Dendritic cell treated with granulocyte-macrophage colony-stimulating factor and Interleukin-4, amounts not matched to agents 40 ng/mL and 50 ng/mL, for 4 days (primary cell): ENCODE measurements at regions of chr19 and their contacts with region 1.

Region 1: GRCh38 chr19:36489118-36489919 is at the start of gene ZNF566:
- H3K4me3 Mint-ChIP-seq: peak within 1 kb of the TSS; percentile 99
- H3K27ac Mint-ChIP-seq: peak within 1 kb of the TSS; percentile 94
- H3K4me1 Mint-ChIP-seq: peaks cover 27% of the 10 kb centered on the region
- H3K27me3 Mint-ChIP-seq: no peaks in the 10 kb centered on the region

Region 2: DNA sequence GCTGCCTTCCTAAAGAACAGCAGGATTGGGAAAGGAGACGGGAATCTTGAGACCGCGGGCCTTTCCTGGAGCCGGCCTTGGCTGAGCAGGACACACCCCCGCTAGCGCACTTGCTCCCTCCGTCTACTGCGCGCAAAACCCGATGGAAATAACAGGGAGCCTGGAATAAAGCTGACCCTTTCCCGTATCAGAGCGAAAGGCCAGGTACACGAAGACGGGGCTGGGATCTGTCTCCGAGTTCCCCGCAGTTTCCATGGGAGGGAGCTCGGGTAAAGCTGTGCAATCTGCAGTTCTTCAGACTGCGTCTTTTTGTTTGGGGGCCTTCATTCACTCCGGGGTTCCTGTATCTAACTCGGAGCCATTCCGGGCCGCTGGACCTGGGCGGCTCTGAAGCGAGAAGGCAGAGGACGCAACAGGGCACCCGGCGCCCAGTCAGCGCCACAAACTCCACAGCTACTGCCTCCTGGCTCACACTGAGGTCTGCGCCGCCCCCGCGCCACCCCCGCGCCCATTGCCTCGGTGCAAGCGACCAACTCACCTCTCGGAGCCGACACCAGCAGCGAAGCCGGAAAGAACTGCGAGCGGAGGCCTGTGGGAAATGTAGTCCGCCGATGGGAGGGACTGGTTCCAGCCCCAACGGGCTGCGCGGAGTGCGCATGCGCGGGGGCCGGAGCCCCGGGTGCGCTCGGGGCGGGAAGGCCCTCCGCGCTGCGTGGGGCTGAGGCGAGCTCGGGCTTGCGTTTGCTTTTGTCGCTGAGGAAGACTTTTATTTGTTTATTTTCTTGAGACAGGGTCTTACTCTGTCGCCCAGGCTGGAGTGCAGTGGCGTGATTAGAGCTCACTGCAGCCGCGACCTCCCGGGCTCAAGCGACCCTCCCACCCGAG is 110.5 kb before region 1 on chr19 and contains the start of gene ZFP14:
- intact Hi-C with region 1: loop called (anchors 2 kb)
- H3K4me3 Mint-ChIP-seq: peak within 1 kb of the TSS; percentile 92
- H3K27ac Mint-ChIP-seq: peak within 1 kb of the TSS; percentile 94
- H3K4me1 Mint-ChIP-seq: peaks cover 17% of the 10 kb centered on the region
- H3K27me3 Mint-ChIP-seq: no peaks in the 10 kb centered on the region

Region 3: GRCh38 chr19:36436531-36436930 is 52.8 kb before region 1 on chr19:
- intact Hi-C with region 1: no loop called
- H3K4me3 Mint-ChIP-seq: no peak overlapping the region
- H3K27ac Mint-ChIP-seq: no peak overlapping the region
- H3K4me1 Mint-ChIP-seq: no peaks in the 10 kb centered on the region
- H3K27me3 Mint-ChIP-seq: no peaks in the 10 kb centered on the region

Region 4: DNA sequence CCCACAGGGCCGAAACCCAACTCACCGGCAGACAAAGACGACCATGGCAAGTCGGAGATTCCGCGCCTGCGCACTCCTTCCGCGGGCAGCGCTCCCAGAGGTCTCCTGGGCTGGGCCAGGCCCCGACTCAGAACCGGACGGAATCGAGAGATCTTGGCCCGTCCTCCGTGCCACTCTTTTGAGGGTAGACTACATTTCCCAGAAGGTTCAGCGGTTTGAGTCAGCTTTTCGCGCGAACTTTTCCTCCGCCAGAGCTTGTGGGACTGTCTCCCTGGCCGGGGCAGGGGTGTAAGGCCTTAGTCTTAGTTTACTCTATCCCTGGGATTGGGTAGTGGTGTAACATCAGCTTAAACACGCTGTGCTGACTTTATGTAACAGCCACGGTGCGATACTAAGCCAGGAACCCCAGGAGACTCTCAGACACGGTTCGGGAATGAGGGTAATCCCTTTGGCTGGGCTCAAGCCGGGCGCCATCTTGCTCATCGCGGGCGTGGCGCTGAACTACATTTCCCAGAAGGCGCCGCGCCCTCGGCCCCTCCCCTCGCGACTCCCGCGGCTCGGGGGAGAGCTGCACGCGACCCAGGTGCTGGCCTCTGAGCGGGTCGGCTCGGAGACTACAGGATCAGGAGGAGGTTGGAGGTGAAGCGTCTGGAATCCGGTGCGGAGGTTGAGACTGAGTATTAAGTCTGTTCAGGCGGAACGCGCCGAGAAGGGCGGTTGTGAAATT is 39.0 kb after region 1 on chr19 and contains the start of gene ZNF260:
- intact Hi-C with region 1: loop called (anchors 1 kb)
- H3K4me3 Mint-ChIP-seq: peak within 1 kb of the TSS; percentile 97
- H3K27ac Mint-ChIP-seq: peak within 1 kb of the TSS; percentile 97
- H3K4me1 Mint-ChIP-seq: peaks cover 9% of the 10 kb centered on the region
- H3K27me3 Mint-ChIP-seq: no peaks in the 10 kb centered on the region